Activated T-helper 1 cell treated with anti-CD3 and anti-CD28 coated beads, Interleukin-12 subunit alpha, Interleukin-12 subunit beta, Interleukin-2, Interleukin-4 antibody, amounts not matched to agents 30 ng/mL and 10 ng/mL and 1 ng/mL, durations not matched to agents 14 hours and 24 hours and 36 hours (primary cell): ENCODE measurements at regions of chr13 and their contacts with region 1.

Region 1: DNA sequence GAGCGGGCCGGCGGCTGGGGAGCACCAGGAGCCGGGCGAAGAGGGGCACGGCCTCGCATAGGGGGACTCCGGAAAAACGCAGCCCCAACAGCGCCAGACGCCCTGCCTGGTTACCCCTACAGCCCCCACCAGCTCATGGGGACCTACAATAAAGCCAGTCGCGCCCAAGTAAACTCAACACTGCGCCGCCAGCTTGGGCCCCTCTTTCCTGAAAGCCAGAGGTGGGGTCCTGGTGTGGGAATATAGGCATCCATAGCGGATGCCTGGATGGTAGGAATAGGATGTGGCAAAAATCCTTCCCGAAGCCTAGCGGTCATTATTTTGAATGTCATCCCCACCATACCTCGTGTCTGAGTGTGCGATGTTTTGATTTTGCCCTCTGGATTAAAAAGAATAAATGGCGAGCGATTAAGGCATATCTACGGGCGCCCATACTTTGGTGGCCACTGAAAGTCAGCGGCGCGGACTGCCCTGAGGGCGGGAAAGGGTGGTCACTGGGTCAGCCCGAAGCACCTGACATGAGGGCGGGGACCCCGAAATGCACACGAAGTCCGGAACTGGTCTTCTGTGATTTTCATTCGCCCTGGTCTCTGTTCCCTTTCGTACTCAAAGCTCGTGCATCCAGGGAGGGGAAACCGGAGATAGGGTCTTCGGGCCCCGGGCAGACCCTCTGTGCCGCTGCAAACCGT is at the starts of genes NHLRC3 and PROSER1:
- DNase-seq: peak; percentile 68
- H3K4me3 Mint-ChIP-seq: peak within 1 kb of the TSS; percentile 91
- H3K27ac Mint-ChIP-seq: peak within 1 kb of the TSS; percentile 94
- H3K4me1 Mint-ChIP-seq: peaks cover 64% of the 10 kb centered on the region
- H3K27me3 Mint-ChIP-seq: no peaks in the 10 kb centered on the region
- total RNA-seq, gene NHLRC3: 19.2 and 20.4 TPM in 2 replicates
- total RNA-seq, gene PROSER1: 92.9 and 103 TPM in 2 replicates

Region 2: DNA sequence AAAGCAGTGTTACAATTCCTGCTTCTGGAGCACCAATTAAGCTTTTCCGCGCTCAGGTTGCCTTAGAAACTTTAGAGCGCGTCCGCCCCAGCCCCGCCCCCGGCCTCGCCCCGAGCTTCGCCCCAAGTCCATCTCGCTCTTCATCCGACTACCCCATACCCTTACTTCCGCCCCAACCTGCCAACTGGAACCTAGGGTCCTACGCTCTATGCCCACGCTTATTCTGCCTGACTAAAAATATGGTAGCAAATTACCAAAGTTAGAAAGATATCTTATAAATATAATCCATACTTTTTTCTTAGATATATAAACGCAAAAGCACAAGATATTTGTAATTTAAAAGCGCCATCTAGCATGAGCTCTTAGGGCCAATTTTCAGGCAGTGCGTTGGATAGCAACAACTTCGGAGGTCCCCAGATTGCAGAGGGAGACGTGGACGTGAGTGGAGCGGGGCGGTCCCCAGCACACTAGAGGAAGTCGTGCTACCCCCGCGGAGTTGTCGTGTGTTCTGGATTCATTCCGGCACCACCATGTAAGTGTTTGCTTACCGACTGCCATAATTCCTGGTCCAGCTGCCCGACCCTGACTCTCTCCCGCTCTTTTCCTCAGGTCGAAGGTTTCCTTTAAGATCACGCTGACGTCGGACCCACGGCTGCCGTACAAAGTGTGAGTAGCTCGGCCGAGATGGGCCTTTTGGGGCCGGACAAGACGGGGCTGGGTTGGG is 688.5 kb before region 1 on chr13 and contains the start of gene UFM1:
- intact Hi-C with region 1: loop called (anchors 1 kb)
- DNase-seq: peak; percentile 81
- H3K4me3 Mint-ChIP-seq: peak within 1 kb of the TSS; percentile 98
- H3K27ac Mint-ChIP-seq: peak within 1 kb of the TSS; percentile 100
- H3K4me1 Mint-ChIP-seq: peaks cover 36% of the 10 kb centered on the region
- H3K27me3 Mint-ChIP-seq: peaks cover 3% of the 10 kb centered on the region
- total RNA-seq, gene UFM1: 66.9 and 71.3 TPM in 2 replicates

Region 3: DNA sequence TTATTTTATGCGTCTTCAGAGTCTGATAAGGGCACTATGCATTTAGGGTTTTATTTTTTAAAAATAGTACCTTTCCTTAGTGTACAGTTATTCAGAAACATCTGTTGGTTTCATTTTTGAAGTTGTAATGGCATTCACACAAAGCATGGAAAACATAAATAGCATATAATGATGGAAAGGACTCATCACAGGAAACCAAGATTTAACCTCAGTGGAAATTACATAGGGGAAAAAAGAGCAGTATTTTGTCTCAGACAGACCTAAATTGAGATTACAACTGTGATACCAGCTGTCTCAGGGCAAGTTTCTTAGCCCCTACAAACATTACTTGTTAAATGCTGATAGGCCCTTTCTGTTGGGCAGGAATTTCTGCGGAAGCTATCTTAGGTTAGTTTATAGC is 57.5 kb after region 1 on chr13:
- intact Hi-C with region 1: loop called (anchors 1 kb)
- DNase-seq: no peak
- H3K4me3 Mint-ChIP-seq: peak overlapping the region; percentile 68
- H3K27ac Mint-ChIP-seq: peak overlapping the region; percentile 92
- H3K4me1 Mint-ChIP-seq: peaks cover 35% of the 10 kb centered on the region
- H3K27me3 Mint-ChIP-seq: no peaks in the 10 kb centered on the region

Region 4: GRCh38 chr13:39263033-39263432 is 225.0 kb after region 1 on chr13:
- intact Hi-C with region 1: loop called (anchors 1 kb)
- DNase-seq: peak; percentile 14
- H3K4me3 Mint-ChIP-seq: no peak overlapping the region
- H3K27ac Mint-ChIP-seq: no peak overlapping the region
- H3K4me1 Mint-ChIP-seq: peaks cover 9% of the 10 kb centered on the region
- H3K27me3 Mint-ChIP-seq: peaks cover 6% of the 10 kb centered on the region

Region 5: DNA sequence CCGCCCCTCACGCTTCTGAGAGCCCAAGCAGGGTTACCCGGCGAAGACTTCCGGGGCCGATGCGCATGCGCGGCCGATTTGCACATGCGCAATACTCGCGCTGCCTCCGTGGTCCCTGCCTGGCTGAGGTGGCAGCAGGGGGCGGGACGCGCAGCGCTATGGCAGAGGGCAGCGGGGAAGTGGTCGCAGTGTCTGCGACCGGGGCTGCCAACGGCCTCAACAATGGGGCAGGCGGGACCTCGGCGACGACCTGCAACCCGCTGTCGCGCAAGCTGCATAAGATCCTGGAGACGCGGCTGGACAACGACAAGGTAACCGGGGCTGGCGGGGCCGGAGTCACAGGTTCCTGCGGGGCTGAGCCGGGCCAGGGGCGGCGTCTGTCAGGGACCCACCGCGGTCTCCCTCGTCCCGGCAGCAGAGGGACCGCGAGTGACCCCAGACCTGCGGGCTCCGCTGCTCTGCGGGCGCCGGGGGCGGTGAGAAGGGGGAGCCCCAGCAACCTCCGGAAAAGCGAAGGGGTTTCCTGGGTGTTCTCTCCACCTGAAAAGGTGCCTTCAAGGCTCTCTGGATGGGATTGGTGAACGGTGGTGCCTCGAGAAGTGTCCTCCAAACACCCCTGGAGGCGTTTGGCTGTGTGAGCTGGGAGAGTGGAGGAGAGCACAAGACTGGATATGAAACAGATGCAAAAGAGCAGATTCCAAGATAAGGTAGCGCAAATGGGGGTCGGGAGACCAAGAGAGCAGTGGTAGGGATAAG is 617.7 kb after region 1 on chr13 and contains the start of gene COG6:
- intact Hi-C with region 1: loop called (anchors 1 kb)
- DNase-seq: peak; percentile 91
- H3K4me3 Mint-ChIP-seq: peak within 1 kb of the TSS; percentile 96
- H3K27ac Mint-ChIP-seq: peak within 1 kb of the TSS; percentile 87
- H3K4me1 Mint-ChIP-seq: peaks cover 17% of the 10 kb centered on the region
- H3K27me3 Mint-ChIP-seq: peaks cover 4% of the 10 kb centered on the region
- total RNA-seq, gene COG6: 25.6 and 31.8 TPM in 2 replicates

Region 6: GRCh38 chr13:40764587-40765403 is 1726.8 kb after region 1 on chr13:
- intact Hi-C with region 1: loop called (anchors 5 kb)
- DNase-seq: no peak
- H3K4me3 Mint-ChIP-seq: peak overlapping the region; percentile 23
- H3K27ac Mint-ChIP-seq: peak overlapping the region; percentile 88
- H3K4me1 Mint-ChIP-seq: peaks cover 39% of the 10 kb centered on the region
- H3K27me3 Mint-ChIP-seq: no peaks in the 10 kb centered on the region